ENCODE measurements at regions of chr14 and their contacts with region 1.

Region 1: DNA sequence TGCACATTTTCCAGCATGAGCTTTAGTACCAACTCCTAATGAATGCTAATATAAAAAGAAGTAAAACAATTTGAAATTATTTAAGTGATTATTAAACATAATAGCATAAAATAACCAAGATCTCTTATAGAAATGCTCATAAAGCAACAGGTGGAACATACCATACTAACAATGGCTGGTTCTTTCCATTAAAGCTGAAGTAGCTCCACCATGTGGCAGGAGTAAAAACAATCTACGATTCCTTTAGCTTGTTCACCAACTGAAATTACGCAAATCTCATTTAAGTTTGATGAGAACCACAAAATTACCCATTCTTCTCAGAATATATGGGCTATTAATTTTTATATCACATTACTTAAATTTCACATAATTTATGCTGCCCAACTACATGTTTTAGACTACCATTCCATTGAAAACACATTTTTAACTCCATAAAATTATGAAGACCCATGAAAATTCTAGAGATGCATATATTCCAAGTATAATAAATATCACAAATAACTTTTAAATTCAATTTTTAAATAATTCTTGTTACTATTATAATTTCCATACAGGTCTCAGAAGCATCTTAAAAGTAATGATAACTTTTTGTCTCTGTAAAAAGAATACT is 213.6 kb downstream of the DAD1 start:
- DNase-seq: peak; percentile 79
- ATAC-seq: peak; percentile 87
- H3K4me3 ChIP-seq: no peak overlapping the region
- H3K27ac ChIP-seq: no peak overlapping the region
- H3K4me1 ChIP-seq: no peaks in the 10 kb centered on the region
- H3K27me3 ChIP-seq: no peaks in the 10 kb centered on the region
- CTCF ChIP-seq: peak; percentile 87
- EP300 ChIP-seq: no peak
- POLR2A ChIP-seq: no peak
- RAD21 ChIP-seq: no peak; the same call in 1 of the 2 replicates

Region 2: GRCh38 chr14:22122227-22122818 is 253.1 kb before region 1 on chr14:
- CTCF ChIA-PET with region 1: no interaction called
- POLR2A ChIA-PET with region 1: no interaction called
- in situ Hi-C with region 1: no loop called
- intact Hi-C with region 1: loop called (anchors 5 kb)
- DNase-seq: peak; percentile 37
- ATAC-seq: peak; percentile 92
- H3K4me3 ChIP-seq: no peak overlapping the region
- H3K27ac ChIP-seq: no peak overlapping the region
- H3K4me1 ChIP-seq: no peaks in the 10 kb centered on the region
- H3K27me3 ChIP-seq: no peaks in the 10 kb centered on the region
- CTCF ChIP-seq: peak; percentile 62
- EP300 ChIP-seq: no peak
- POLR2A ChIP-seq: no peak
- RAD21 ChIP-seq: no peak

Region 3: DNA sequence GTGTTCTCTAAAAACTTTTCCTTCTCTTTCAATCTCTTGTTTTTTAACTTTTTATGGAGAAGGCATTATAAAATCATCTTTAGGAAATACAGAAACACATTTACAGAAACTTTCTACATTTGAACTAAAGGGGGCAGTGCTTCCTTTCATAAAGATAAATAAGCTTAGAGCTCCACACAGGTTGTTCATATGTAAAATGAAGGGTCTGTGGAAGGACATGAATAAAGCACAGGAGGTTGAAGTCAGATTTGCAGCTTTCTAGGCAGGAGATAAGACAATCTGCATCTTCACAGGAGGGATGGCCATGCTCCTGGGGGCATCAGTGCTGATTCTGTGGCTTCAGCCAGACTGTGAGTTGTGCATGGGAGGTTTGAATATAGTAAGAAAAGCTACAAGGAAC is 212.4 kb before region 1 on chr14:
- CTCF ChIA-PET with region 1: interaction called, 6 read pairs
- POLR2A ChIA-PET with region 1: no interaction called
- in situ Hi-C with region 1: loop called (anchors 10 kb)
- intact Hi-C with region 1: loop called (anchors 1 kb)
- DNase-seq: peak; percentile 43
- ATAC-seq: peak; percentile 72
- H3K4me3 ChIP-seq: no peak overlapping the region
- H3K27ac ChIP-seq: no peak overlapping the region
- H3K4me1 ChIP-seq: no peaks in the 10 kb centered on the region
- H3K27me3 ChIP-seq: no peaks in the 10 kb centered on the region
- CTCF ChIP-seq: peak; percentile 57
- EP300 ChIP-seq: no peak
- POLR2A ChIP-seq: no peak
- RAD21 ChIP-seq: no peak

Region 4: DNA sequence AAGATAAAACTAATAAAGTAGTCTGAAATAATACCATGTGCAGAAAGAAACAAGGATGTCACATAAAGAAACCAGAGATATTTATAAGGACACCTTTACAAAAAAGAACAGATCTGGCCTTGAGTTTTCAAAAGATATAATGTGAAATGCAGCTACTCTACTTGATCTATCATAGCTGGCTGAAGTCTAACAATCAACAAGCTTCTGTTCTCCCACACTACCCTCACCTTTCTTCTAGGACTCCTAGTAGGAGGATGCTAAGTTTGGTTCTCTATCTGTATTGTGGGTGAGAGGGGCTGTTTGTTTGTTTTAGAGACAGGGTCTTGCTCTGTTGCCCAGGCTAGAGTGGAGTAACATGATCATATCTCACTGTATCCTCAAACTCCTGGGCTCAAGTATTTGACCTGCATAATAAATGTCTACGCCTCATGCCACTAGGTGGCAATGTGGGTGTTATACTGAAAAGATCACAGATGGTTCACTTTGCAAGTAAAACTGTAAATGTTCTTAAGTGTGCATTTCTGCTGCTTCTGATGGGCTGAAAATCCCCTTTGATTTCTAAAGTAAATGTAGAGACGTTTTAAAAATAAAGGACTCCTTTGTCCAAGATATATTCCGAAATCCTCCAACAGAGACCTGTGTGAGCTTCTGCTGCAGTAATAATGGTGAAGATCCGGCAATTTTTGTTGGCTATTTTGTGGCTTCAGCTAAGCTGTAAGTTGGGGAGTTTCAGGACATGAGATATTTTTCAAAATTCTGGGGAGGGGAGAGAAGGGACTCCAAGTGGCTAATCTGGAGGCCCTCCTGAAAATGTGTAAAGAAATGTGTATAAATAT is 55.7 kb before region 1 on chr14:
- CTCF ChIA-PET with region 1: interaction called, 100 read pairs
- POLR2A ChIA-PET with region 1: interaction called, 5 read pairs
- in situ Hi-C with region 1: loop called (anchors 5 kb)
- intact Hi-C with region 1: loop called (anchors 1 kb)
- DNase-seq: peak; percentile 80
- ATAC-seq: peak; percentile 98
- H3K4me3 ChIP-seq: no peak overlapping the region
- H3K27ac ChIP-seq: no peak overlapping the region
- H3K4me1 ChIP-seq: no peaks in the 10 kb centered on the region
- H3K27me3 ChIP-seq: 0 out of 5 replicates have a peak, but pooled peaks cover 0 to 5% of the 10 kb centered on the region in 2 experiments
- CTCF ChIP-seq: peak; percentile 93
- EP300 ChIP-seq: no peak
- POLR2A ChIP-seq: no peak
- RAD21 ChIP-seq: peak; percentile 70